ENCODE measurements at regions of chr6 and their contacts with region 1.

Region 1: GRCh38 chr6:166598441-166599138 is 12.1 kb upstream of the RAMACL start:
- DNase-seq: peak in 1 of 2 donors; percentile 83
- H3K4me3 ChIP-seq: no peak overlapping the region
- H3K27ac ChIP-seq: peak overlapping the region; percentile 45 to 83
- H3K4me1 ChIP-seq: peaks cover 0 to 10% of the 10 kb centered on the region in 2 donors
- H3K27me3 ChIP-seq: no peaks in the 10 kb centered on the region
- CTCF ChIP-seq: no peak

Region 2: GRCh38 chr6:166375013-166375412 is 223.6 kb before region 1 on chr6:
- intact Hi-C with region 1: no loop called
- DNase-seq: no peak
- H3K4me3 ChIP-seq: no peak overlapping the region
- H3K27ac ChIP-seq: no peak overlapping the region
- H3K4me1 ChIP-seq: peaks cover 0 to 6% of the 10 kb centered on the region in 2 donors
- H3K27me3 ChIP-seq: no peaks in the 10 kb centered on the region
- CTCF ChIP-seq: no peak

Region 3: DNA sequence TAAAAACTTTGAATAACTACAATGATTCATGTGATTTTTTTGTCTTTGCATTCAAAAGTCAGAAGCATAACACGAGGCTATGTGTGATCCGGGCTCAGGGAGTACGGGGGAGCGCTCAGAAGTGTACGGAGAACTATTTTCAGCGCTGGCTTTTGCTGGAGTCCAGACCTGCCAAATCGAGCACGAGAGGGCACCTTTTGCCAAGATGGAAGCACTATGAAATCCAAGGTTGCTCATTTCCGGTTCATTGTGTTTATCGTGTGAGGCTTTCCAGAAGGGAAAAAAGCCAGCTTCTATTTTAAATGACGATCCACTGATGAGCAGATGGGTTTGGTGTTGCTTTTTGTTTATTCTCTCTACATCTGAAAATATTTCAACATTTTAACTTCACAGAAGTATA is 23.4 kb before region 1 on chr6:
- intact Hi-C with region 1: loop called (anchors 2 kb)
- DNase-seq: peak; percentile 26 to 85
- H3K4me3 ChIP-seq: no peak overlapping the region
- H3K27ac ChIP-seq: peak overlapping the region; percentile 43 to 60
- H3K4me1 ChIP-seq: peaks cover 0 to 5% of the 10 kb centered on the region in 2 donors
- H3K27me3 ChIP-seq: no peaks in the 10 kb centered on the region
- CTCF ChIP-seq: no peak